ENCODE measurements at regions of chr11 and their contacts with region 1.

Region 1: GRCh38 chr11:32052218-32052617 is 38.7 kb upstream of the RCN1 start:
- H3K4me3 ChIP-seq: no peak overlapping the region
- H3K27ac ChIP-seq: no peak overlapping the region
- H3K4me1 ChIP-seq: no peaks in the 10 kb centered on the region
- CTCF ChIP-seq: no peak

Region 2: DNA sequence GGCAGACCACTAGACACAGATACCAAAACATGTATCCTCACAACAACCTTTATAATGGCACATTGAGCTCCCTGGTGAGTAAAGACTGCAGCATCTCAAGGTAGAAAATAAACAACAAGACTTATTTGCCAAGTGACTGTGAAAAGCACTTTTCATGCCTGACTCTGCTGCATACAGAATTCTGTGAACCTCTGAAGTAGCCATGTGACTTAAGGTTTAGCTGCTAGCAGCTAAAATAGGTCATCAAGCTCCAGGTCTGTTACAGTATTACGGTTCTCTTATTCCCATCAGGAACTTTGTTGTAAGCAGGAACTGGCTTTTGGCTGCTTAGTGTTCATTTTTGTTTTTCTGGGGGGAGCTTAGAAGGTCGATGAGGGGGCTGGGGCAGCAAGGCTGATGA is 380.5 kb before region 1 on chr11:
- CTCF ChIA-PET with region 1: no interaction called
- POLR2A ChIA-PET with region 1: no interaction called
- H3K4me3 ChIP-seq: no peak overlapping the region
- H3K27ac ChIP-seq: no peak overlapping the region
- H3K4me1 ChIP-seq: no peaks in the 10 kb centered on the region
- CTCF ChIP-seq: no peak

Region 3: GRCh38 chr11:32006799-32007388 is 45.3 kb before region 1 on chr11:
- CTCF ChIA-PET with region 1: interaction called, 12 read pairs
- POLR2A ChIA-PET with region 1: no interaction called
- H3K4me3 ChIP-seq: no peak overlapping the region
- H3K27ac ChIP-seq: no peak overlapping the region
- H3K4me1 ChIP-seq: no peaks in the 10 kb centered on the region
- CTCF ChIP-seq: no peak

Region 4: GRCh38 chr11:32034149-32034548 is 18.1 kb before region 1 on chr11:
- CTCF ChIA-PET with region 1: interaction called, 13 read pairs
- POLR2A ChIA-PET with region 1: no interaction called
- H3K4me3 ChIP-seq: no peak overlapping the region
- H3K27ac ChIP-seq: no peak overlapping the region
- H3K4me1 ChIP-seq: no peaks in the 10 kb centered on the region
- CTCF ChIP-seq: no peak

Region 5: DNA sequence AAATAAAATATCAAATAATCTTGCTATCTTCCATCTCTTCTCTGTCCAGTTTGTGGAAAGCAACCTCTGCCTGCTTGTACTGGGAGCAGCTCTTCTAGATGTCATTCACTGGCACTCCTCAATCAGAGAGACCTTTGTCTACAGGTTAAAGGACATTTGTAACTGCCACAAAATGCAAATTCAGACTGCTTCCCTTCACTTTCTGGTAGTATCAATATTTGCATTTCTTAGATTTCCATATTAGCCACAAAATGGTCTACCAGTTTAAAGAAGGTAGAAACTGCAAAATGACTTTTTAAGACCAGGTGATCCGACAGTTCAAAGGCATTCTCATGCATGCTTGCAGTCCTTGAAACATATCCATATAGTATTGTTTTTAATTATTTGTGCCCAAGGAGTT is 13.1 kb before region 1 on chr11:
- CTCF ChIA-PET with region 1: interaction called, 13 read pairs
- POLR2A ChIA-PET with region 1: no interaction called
- H3K4me3 ChIP-seq: no peak overlapping the region
- H3K27ac ChIP-seq: no peak overlapping the region
- H3K4me1 ChIP-seq: no peaks in the 10 kb centered on the region
- CTCF ChIP-seq: no peak

Region 6: DNA sequence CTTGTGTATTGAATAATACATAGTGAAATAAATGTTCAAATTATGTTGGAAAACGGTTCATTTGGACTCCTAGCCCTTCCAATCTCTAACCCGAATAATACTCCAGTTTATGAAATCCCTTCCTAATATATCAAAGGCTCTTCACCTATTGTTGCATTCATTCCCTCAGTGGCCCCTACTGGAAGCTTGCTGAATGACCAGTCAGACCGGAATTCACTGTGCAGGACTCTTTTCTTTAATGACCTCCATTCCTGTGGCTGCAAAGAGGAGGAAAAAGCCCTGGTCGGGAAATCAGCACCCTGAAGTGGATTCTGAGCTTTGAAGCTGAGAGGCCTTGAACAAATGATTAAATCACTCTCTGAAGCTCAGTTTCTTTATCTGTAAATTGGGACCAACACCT is 19.6 kb after region 1 on chr11:
- CTCF ChIA-PET with region 1: interaction called, 35 read pairs
- POLR2A ChIA-PET with region 1: no interaction called
- H3K4me3 ChIP-seq: no peak overlapping the region
- H3K27ac ChIP-seq: no peak overlapping the region
- H3K4me1 ChIP-seq: 0 out of 2 replicates have a peak, but pooled peaks cover 5% of the 10 kb centered on the region
- CTCF ChIP-seq: no peak

Region 7: GRCh38 chr11:32154275-32154674 is 102.1 kb after region 1 on chr11:
- CTCF ChIA-PET with region 1: interaction called, 48 read pairs
- POLR2A ChIA-PET with region 1: no interaction called
- H3K4me3 ChIP-seq: no peak overlapping the region
- H3K27ac ChIP-seq: no peak overlapping the region
- H3K4me1 ChIP-seq: peaks cover 2% of the 10 kb centered on the region
- CTCF ChIP-seq: peak; percentile 48

Region 8: GRCh38 chr11:32451808-32452207 is 399.6 kb after region 1 on chr11:
- CTCF ChIA-PET with region 1: no interaction called
- POLR2A ChIA-PET with region 1: no interaction called
- H3K4me3 ChIP-seq: no peak overlapping the region
- H3K27ac ChIP-seq: no peak overlapping the region
- H3K4me1 ChIP-seq: no peaks in the 10 kb centered on the region
- CTCF ChIP-seq: no peak

Measured in HEK293 (cell line).